Tibial artery (tissue), 4 donors: ENCODE measurements at regions of chr13 and their contacts with region 1.

Region 1: GRCh38 chr13:30963791-30964190 is 31.3 kb downstream of the TEX26 start:
- DNase-seq: no peak
- H3K4me3 ChIP-seq: no peak overlapping the region
- H3K27ac ChIP-seq: no peak overlapping the region
- H3K4me1 ChIP-seq: peaks cover 0 to under 1% (median 0%) of the 10 kb centered on the region in 4 donors
- H3K27me3 ChIP-seq: peaks cover 0 to 4% of the 10 kb centered on the region in 2 donors
- CTCF ChIP-seq: no peak

Region 2: GRCh38 chr13:31476266-31476665 is 512.5 kb after region 1 on chr13:
- intact Hi-C with region 1: loop called (anchors 5 kb)
- DNase-seq: no peak
- H3K4me3 ChIP-seq: no peak overlapping the region
- H3K27ac ChIP-seq: no peak overlapping the region
- H3K4me1 ChIP-seq: peaks cover 0 to 5% (median 0%) of the 10 kb centered on the region in 4 donors
- H3K27me3 ChIP-seq: no peaks in the 10 kb centered on the region
- CTCF ChIP-seq: no peak